ENCODE measurements at regions of chr10 and their contacts with region 1.

Region 1: GRCh38 chr10:74826142-74827044 is at the start of gene KAT6B:
- DNase-seq: peak; percentile 100
- H3K4me3 Mint-ChIP-seq: peak within 1 kb of the TSS; percentile 83
- H3K27ac Mint-ChIP-seq: peak within 1 kb of the TSS; percentile 93
- H3K4me1 Mint-ChIP-seq: peaks cover 55% of the 10 kb centered on the region
- H3K27me3 Mint-ChIP-seq: no peaks in the 10 kb centered on the region
- total RNA-seq, gene KAT6B: 17.3 to 17.9 TPM

Region 2: DNA sequence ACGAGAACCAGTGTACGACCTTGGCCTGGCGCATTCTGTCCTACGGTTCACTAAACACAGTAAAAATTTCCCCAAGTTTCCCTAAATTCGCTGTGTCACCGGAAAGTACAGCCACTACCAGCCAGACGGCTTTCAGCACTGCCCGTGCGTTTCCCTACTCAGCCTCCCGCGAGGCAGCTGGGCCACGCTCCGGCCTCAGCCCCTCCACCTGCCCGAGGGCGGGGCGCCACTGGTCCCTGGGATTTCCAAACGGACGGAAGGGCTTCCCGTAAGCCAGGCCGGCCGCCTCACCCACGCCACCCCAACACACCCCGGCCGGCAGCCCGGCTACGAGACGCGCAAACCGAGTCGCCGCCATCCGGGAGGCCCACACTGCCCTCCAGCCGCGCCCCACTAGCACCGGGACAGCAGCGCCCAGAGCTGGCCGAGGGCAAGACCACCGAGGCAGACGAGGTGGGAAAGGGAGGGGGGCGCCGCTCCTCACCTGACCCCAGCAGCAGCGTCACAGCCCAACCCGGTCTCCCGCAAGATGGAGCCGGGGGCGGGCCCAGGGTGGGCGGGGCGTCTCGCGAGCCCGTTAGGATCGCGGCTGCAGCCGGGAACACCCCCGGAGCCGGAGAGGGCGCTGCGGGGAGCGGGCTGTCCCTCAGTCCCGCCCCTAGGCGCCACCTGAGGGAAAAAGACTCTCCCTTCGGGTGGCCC is 1412.7 kb before region 1 on chr10 and contains the start of gene ANXA7:
- CTCF ChIA-PET with region 1: no interaction called
- intact Hi-C with region 1: loop called (anchors 5 kb)
- DNase-seq: peak; percentile 96
- H3K4me3 Mint-ChIP-seq: peak within 1 kb of the TSS; percentile 95
- H3K27ac Mint-ChIP-seq: peak within 1 kb of the TSS; percentile 93
- H3K4me1 Mint-ChIP-seq: peaks cover 56% of the 10 kb centered on the region
- H3K27me3 Mint-ChIP-seq: peaks cover 5% of the 10 kb centered on the region
- total RNA-seq, gene ANXA7: 130 to 134 TPM

Region 3: GRCh38 chr10:74262856-74263255 is 563.5 kb before region 1 on chr10:
- CTCF ChIA-PET with region 1: no interaction called
- intact Hi-C with region 1: loop called (anchors 1 kb)
- DNase-seq: no peak
- H3K4me3 Mint-ChIP-seq: no peak overlapping the region
- H3K27ac Mint-ChIP-seq: no peak overlapping the region
- H3K4me1 Mint-ChIP-seq: peaks cover 26% of the 10 kb centered on the region
- H3K27me3 Mint-ChIP-seq: no peaks in the 10 kb centered on the region

Region 4: DNA sequence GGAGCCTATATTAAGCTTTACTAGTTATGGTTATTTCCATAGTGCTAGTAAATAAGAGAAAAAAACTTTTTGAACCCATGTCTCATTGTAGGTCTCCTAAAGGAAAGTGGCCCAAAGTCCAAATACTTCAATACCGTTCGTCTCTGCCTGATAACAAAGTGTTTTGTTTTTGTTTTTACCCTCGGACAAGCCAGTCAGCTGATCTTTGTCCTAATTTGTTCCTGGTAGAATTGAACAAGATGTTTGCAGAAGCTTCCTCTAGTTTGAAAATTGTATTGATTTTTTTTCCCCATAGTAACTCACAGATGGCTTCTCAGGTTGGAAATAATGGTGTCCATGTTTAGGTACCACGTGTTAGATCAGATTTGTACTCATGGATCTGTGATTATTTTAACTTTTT is 335.8 kb before region 1 on chr10:
- CTCF ChIA-PET with region 1: no interaction called
- intact Hi-C with region 1: no loop called
- DNase-seq: no peak
- H3K4me3 Mint-ChIP-seq: no peak overlapping the region
- H3K27ac Mint-ChIP-seq: no peak overlapping the region
- H3K4me1 Mint-ChIP-seq: peaks cover 1% of the 10 kb centered on the region
- H3K27me3 Mint-ChIP-seq: no peaks in the 10 kb centered on the region

Region 5: GRCh38 chr10:74750848-74751274 is 75.5 kb before region 1 on chr10:
- CTCF ChIA-PET with region 1: no interaction called
- intact Hi-C with region 1: no loop called
- DNase-seq: peak; percentile 9
- H3K4me3 Mint-ChIP-seq: no peak overlapping the region
- H3K27ac Mint-ChIP-seq: no peak overlapping the region
- H3K4me1 Mint-ChIP-seq: no peaks in the 10 kb centered on the region
- H3K27me3 Mint-ChIP-seq: no peaks in the 10 kb centered on the region

Region 6: DNA sequence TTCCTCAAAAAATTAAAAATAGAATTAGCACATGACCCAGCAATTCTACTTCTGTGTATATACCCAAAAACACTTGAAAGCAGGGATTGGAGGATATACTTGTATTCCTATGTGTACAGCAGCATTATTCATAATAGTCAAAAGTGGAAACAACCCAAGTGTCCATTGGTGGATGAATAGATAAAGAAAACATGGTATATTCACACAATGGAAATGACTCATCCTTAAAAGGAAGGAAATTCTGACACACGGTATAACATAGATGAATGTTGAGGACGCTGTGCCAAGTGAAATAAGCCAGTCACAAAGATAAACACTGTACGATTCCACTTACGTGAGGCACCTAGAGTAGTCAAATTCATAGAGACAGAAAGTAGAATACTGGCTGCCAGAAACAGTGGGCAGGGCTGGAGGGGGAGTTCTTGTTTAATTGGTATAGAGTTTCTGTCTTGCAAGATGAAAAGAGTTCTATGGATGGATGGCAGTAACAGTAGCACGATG is 26.6 kb before region 1 on chr10:
- CTCF ChIA-PET with region 1: no interaction called
- intact Hi-C with region 1: loop called (anchors 2 kb)
- DNase-seq: peak; percentile 62
- H3K4me3 Mint-ChIP-seq: no peak overlapping the region
- H3K27ac Mint-ChIP-seq: no peak overlapping the region
- H3K4me1 Mint-ChIP-seq: peaks cover 13% of the 10 kb centered on the region
- H3K27me3 Mint-ChIP-seq: no peaks in the 10 kb centered on the region

Region 7: DNA sequence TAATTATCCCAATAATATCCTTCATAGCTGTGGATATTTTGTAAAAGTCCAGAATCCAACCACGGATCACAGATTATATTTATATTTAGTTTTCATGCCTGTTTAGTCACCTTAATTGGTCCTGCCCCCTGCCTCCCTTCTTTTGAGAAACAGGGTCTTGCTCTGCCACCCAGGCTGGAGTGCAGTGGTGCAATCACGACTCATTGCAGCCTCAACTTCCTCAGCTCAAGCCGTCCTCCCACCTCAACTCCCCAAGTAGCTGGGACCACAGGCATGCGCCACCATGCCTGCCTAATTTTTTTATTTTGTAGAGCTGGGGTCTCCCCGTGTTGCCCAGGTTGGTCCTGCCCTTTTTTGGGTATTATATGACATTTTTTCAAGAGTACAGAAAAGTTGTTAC is 129.4 kb after region 1 on chr10:
- CTCF ChIA-PET with region 1: no interaction called
- intact Hi-C with region 1: no loop called
- DNase-seq: no peak
- H3K4me3 Mint-ChIP-seq: no peak overlapping the region
- H3K27ac Mint-ChIP-seq: no peak overlapping the region
- H3K4me1 Mint-ChIP-seq: peaks cover 19% of the 10 kb centered on the region
- H3K27me3 Mint-ChIP-seq: no peaks in the 10 kb centered on the region

Region 8: GRCh38 chr10:74977913-74978847 is 151.8 kb after region 1 on chr10:
- CTCF ChIA-PET with region 1: no interaction called
- intact Hi-C with region 1: loop called (anchors 2 kb)
- DNase-seq: peak; percentile 84
- H3K4me3 Mint-ChIP-seq: peak overlapping the region; percentile 9
- H3K27ac Mint-ChIP-seq: peak overlapping the region; percentile 72
- H3K4me1 Mint-ChIP-seq: peaks cover 36% of the 10 kb centered on the region
- H3K27me3 Mint-ChIP-seq: no peaks in the 10 kb centered on the region

Region 9: GRCh38 chr10:75210282-75211006 is 384.1 kb after region 1 on chr10 and contains the start of gene VDAC2:
- CTCF ChIA-PET with region 1: no interaction called
- intact Hi-C with region 1: loop called (anchors 1 kb)
- DNase-seq: peak; percentile 92
- H3K4me3 Mint-ChIP-seq: peak within 1 kb of the TSS; percentile 100
- H3K27ac Mint-ChIP-seq: peak within 1 kb of the TSS; percentile 99
- H3K4me1 Mint-ChIP-seq: peaks cover 42% of the 10 kb centered on the region
- H3K27me3 Mint-ChIP-seq: no peaks in the 10 kb centered on the region
- total RNA-seq, gene VDAC2: 193 TPM